GM10248 (cell line): ENCODE measurements at regions of chr4 and their contacts with region 1.

Region 1: GRCh38 chr4:169741569-169741968 is 16.2 kb downstream of the HPF1 start:
- DNase-seq: no peak
- CTCF ChIP-seq: no peak

Region 2: DNA sequence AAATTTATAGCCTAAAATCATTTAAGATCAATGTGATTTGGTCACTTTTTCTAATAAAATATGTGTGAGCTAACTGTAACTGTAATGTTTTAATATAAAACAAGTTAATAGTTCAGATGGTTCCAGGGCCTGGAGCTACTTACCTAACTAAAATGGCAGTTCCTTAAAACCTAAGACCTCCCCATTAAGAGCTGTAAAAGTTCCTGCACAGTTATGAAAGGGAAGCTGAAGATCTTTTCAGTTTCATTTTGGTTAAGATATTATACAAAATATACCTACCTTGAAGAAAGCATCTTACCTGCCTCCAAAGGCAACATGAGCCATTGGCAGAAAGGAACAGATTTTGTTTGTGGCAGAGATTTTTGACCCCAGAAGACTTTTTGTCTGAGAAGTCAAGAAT is 14.0 kb before region 1 on chr4:
- CTCF ChIA-PET with region 1: interaction called, 12 read pairs
- POLR2A ChIA-PET with region 1: no interaction called
- DNase-seq: no peak
- CTCF ChIP-seq: no peak

Region 3: DNA sequence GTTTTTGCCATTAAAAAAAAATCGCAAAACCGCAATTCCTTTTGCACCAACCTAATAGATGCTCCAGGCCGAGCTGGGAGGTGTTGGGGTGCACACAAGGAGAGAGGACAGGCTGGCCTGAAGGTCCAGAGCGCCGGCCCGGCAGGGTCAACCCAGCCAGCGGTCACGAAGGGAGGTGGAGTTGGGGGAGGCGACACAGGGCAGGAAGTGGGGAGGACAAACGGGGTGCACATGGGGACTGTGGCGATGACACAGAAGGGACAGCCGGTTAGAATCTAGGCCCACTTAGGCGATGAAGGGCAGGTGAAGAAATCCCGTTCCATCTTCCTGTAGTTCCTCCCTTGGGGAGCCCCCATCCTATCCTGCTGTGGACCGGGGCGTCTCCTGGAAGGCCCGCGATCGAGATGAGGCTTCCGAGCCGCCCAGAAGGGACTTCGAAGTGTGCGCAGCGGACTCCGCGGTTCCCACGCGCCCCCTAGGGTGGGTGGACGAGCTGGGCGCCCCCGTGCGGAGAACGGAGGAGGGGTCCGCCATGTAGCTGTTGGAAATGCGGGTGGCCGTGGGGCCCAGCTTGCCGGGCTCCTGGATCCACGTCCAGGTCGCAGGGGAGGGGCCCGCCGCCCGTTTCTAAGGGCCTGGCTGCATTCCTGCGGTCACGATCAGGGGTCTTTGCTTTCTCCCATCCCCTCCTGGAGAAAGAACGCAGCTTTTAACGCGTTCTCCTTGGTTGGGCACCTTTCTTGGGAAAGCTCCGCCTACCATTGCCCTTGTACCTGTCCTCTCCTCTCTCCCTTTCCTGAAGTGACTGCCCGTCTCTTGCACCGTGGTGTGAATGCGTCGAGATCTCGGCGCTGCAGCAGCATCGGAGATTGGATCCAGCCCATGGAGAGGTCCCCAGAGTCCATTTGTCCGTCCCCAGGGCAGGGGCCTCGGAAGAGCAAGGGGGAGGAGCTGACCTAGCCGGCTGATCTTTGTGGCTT is 33.2 kb after region 1 on chr4:
- CTCF ChIA-PET with region 1: no interaction called
- POLR2A ChIA-PET with region 1: no interaction called
- DNase-seq: peak; percentile 22
- CTCF ChIP-seq: peak; percentile 42